HCT116 (cell line): ENCODE measurements at regions of chr6 and their contacts with region 1.

Region 1: DNA sequence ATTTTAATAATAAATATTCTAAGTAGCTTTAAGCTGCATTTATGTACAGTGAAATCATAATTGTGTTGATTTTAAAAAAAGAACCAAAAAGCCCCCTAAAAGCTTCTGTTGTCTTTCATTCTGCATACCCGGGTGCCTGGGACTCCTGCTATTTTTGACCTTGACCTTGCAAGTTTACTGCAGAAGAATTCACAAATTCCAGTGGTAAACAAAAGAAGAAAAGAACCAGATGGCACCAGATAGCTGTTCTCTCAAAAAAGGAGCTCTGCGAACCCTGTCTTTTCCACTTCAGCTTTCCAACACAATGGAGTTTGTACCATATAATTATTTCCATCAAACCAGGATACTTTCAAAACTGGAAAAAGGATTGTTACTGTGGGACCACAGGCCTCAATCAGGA is 363.3 kb downstream of the SMOC2 start:
- DNase-seq: no peak
- ATAC-seq: no peak
- H3K4me3 ChIP-seq: no peak overlapping the region
- H3K27ac ChIP-seq: no peak overlapping the region
- H3K4me1 ChIP-seq: no peaks in the 10 kb centered on the region
- H3K27me3 ChIP-seq: no peaks in the 10 kb centered on the region
- CTCF ChIP-seq: no peak
- POLR2A ChIP-seq: no peak
- RAD21 ChIP-seq: no peak

Region 2: DNA sequence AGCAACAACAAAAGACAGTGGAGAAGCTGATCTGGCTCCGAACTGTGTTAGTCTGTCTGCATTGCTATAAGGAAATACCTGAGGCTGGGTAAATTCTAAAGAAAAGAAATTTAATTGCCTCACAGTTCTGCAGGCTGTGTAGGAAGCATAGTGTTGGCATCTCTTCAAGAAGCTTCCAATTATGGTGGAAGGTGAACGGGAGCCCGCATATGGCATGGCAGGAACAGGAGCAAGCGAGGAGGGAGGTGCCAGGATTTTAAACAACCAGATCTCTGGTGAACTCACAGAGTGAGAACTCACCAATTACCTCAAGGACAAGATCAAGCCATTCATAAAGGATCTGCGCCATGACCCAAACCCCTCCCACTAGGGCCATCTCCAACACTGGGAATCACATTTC is 69.8 kb before region 1 on chr6:
- CTCF ChIA-PET with region 1: no interaction called
- POLR2A ChIA-PET with region 1: no interaction called
- RAD21 ChIA-PET with region 1: no interaction called
- intact Hi-C with region 1: loop called (anchors 5 kb)
- DNase-seq: no peak
- ATAC-seq: no peak
- H3K4me3 ChIP-seq: no peak overlapping the region
- H3K27ac ChIP-seq: no peak overlapping the region
- H3K4me1 ChIP-seq: peaks cover 0 to 4% of the 10 kb centered on the region in 2 experiments; a peak in 1 of 4 replicates
- H3K27me3 ChIP-seq: no peaks in the 10 kb centered on the region
- CTCF ChIP-seq: no peak
- POLR2A ChIP-seq: no peak
- RAD21 ChIP-seq: no peak

Region 3: DNA sequence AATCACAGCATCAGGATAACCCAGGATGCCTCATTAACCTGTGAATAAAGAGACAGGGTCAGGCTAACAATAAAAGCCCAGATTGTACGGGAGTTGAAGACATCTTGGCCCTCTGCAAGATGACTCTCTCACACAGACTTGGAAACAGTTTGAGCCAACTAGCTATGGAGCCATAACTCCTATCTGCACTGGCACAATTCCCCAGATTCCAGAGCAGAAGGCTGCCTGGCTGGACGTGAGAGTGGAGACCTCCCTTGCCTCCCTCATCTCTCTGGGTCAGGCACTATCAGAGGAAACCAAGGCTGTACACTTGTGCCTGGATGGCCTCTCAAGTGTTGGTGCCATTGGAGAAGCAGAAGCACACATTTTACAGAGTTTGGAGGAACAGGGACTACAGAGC is 136.7 kb after region 1 on chr6:
- CTCF ChIA-PET with region 1: no interaction called
- POLR2A ChIA-PET with region 1: no interaction called
- RAD21 ChIA-PET with region 1: no interaction called
- intact Hi-C with region 1: no loop called
- DNase-seq: no peak
- ATAC-seq: no peak
- H3K4me3 ChIP-seq: no peak overlapping the region
- H3K27ac ChIP-seq: no peak overlapping the region
- H3K4me1 ChIP-seq: no peaks in the 10 kb centered on the region
- H3K27me3 ChIP-seq: peaks cover 9% of the 10 kb centered on the region; the same call in 1 of the 2 replicates
- CTCF ChIP-seq: no peak
- POLR2A ChIP-seq: no peak
- RAD21 ChIP-seq: no peak